ENCODE measurements at regions of chr10 and their contacts with region 1.

Region 1: DNA sequence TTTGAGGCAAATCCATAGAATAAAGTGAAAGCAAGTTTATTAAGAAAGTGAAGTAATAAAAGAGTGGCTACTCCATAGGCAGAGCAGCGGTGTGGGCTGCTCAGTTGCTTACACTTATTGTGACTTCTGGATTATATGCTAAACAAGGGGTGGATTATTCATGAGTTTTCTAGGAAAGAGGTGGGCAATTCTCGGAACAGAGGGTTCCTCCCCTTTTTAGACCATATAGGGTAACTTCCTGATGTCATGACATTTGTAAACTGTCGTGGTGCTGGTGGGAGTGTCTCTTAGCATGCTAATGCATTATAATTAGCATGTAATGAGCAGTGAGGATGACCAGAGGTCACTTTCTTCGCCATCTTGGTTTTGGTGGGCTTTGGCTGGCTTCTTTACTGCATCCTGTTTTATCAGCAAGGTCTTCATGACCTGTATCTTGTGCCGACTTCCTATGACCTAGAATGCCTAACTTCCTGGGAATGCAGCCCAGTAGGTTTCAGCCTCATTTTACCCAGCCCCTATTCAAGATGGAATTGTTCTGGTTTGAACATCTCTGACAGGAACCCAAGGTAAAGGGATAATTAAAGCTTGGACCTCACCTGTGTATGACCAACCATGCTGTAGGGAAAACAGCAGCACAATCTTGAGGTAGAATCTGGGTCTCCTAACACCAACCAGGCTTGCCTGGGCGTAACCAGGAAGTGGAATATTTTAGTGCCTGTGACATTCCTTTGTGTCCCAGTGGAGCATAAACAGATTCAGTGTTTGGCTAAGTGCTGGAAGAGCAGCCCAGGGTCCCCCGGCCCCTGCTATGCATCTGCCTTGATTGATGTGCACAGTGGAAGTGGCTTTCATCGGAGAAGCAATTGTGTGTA is 93.9 kb downstream of the PFKFB3 start:
- DNase-seq: no peak
- H3K4me3 ChIP-seq: no peak overlapping the region
- H3K4me3 Mint-ChIP-seq: no peak overlapping the region
- H3K27ac Mint-ChIP-seq: peak overlapping the region; percentile 10
- H3K4me1 ChIP-seq: peaks cover 27% of the 10 kb centered on the region
- H3K4me1 Mint-ChIP-seq: peaks cover 14% of the 10 kb centered on the region
- H3K27me3 ChIP-seq: no peaks in the 10 kb centered on the region
- H3K27me3 Mint-ChIP-seq: no peaks in the 10 kb centered on the region
- CTCF ChIP-seq: no peak

Region 2: DNA sequence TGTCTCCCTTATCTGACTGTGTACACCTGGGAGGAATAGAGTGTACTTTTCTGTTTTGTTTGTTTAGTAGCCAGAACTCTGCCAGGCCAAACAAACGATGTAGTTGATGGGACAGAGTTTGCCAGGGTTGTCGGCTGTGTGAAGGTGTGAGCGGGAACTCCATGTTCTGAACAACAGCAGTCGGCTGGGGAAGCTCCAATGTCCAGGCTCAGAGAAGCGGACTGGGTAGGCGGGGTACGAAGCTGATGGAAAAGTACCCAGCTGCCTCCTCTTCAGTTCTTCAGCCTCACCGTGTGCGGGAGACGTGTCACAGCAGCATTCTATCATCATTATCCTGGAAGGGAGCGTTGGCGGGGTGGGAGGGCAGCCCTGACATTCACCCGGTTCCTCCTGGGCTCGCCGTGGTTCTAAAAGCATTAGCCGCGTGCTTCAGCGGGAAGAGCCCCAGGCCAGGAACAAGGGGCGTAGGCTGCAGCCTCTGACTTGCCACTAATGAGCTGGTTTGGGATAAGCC is 41.1 kb before region 1 on chr10:
- CTCF ChIA-PET with region 1: no interaction called
- POLR2A ChIA-PET with region 1: no interaction called
- intact Hi-C with region 1: no loop called
- DNase-seq: no peak
- H3K4me3 ChIP-seq: no peak overlapping the region
- H3K4me3 Mint-ChIP-seq: no peak overlapping the region
- H3K27ac Mint-ChIP-seq: no peak overlapping the region
- H3K4me1 ChIP-seq: no peaks in the 10 kb centered on the region
- H3K4me1 Mint-ChIP-seq: peaks cover 7% of the 10 kb centered on the region
- H3K27me3 ChIP-seq: no peaks in the 10 kb centered on the region
- H3K27me3 Mint-ChIP-seq: no peaks in the 10 kb centered on the region
- CTCF ChIP-seq: no peak

Region 3: GRCh38 chr10:6314620-6315205 is 18.1 kb after region 1 on chr10:
- CTCF ChIA-PET with region 1: no interaction called
- POLR2A ChIA-PET with region 1: no interaction called
- intact Hi-C with region 1: loop called (anchors 1 kb)
- DNase-seq: peak; percentile 29 to 55
- H3K4me3 ChIP-seq: no peak overlapping the region
- H3K4me3 Mint-ChIP-seq: peak overlapping the region; percentile 50
- H3K27ac Mint-ChIP-seq: peak overlapping the region; percentile 81
- H3K4me1 ChIP-seq: peaks cover 22% of the 10 kb centered on the region
- H3K4me1 Mint-ChIP-seq: peaks cover 20% of the 10 kb centered on the region
- H3K27me3 ChIP-seq: no peaks in the 10 kb centered on the region
- H3K27me3 Mint-ChIP-seq: no peaks in the 10 kb centered on the region
- CTCF ChIP-seq: no peak

Region 4: DNA sequence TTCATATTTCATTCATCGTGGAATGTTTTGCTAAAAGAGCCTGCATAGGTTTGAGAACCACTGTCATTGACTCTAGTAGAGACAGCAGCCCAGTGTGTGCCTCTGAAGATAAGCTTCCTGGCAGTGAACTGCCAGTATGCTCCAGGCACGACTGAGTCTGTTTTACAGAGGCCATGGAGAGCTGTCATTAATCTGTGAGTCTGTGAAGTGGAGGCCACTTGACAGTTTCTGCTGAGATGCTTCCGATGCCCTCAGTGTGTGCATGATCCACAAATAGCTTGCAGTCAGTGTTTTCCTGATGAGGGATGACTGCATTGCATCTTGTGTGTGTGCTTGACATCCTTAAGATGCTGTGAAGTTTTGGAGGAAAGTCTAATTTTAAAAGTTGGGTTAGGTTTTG is 68.2 kb after region 1 on chr10:
- CTCF ChIA-PET with region 1: no interaction called
- POLR2A ChIA-PET with region 1: no interaction called
- intact Hi-C with region 1: no loop called
- DNase-seq: no peak
- H3K4me3 ChIP-seq: no peak overlapping the region
- H3K4me3 Mint-ChIP-seq: no peak overlapping the region
- H3K27ac Mint-ChIP-seq: peak overlapping the region; percentile 87
- H3K4me1 ChIP-seq: peaks cover 36% of the 10 kb centered on the region
- H3K4me1 Mint-ChIP-seq: peaks cover 29% of the 10 kb centered on the region
- H3K27me3 ChIP-seq: no peaks in the 10 kb centered on the region
- H3K27me3 Mint-ChIP-seq: no peaks in the 10 kb centered on the region
- CTCF ChIP-seq: no peak

Region 5: DNA sequence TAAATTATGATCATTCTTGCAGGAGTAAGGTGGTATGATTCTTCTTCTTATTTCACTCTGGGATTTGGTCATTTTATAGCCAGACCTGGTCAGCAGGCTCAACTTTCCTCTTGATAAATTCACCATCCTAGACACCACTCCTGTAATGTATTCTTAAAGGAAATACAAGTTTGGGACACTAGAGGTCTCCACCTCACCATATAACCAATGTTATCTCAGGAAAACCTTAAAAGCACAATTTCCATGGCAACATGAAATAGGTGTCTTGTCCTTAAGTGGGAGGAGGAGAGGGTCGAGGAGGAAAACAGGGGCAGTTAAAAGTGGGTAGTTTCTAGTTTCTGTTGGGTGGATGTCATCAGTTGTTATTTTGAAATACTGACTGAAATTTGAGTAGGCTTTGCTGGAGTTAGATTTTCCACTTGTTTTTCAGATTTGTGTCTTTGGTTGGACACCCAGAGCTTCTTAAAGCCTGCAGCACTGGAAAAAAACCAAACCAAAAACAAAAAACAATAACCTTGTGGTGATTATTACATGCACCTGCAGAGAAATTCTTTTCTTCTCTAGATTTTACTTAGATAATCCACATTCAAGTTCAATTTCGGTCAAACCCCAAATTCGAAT is 120.3 kb after region 1 on chr10:
- CTCF ChIA-PET with region 1: no interaction called
- POLR2A ChIA-PET with region 1: no interaction called
- intact Hi-C with region 1: no loop called
- DNase-seq: peak in 1 of 2 experiments; percentile 68
- H3K4me3 ChIP-seq: no peak overlapping the region
- H3K4me3 Mint-ChIP-seq: no peak overlapping the region
- H3K27ac Mint-ChIP-seq: no peak overlapping the region
- H3K4me1 ChIP-seq: no peaks in the 10 kb centered on the region
- H3K4me1 Mint-ChIP-seq: no peaks in the 10 kb centered on the region
- H3K27me3 ChIP-seq: peaks cover 5% of the 10 kb centered on the region
- H3K27me3 Mint-ChIP-seq: peaks cover 14% of the 10 kb centered on the region
- CTCF ChIP-seq: peak in 1 of 2 experiments; percentile 81